Heart left ventricle (tissue), 16 donors: ENCODE measurements at regions of chr5 and their contacts with region 1.

Region 1: GRCh38 chr5:141359790-141360426 is at the start of gene PCDHGB2:
- DNase-seq: no peak
- ATAC-seq: peak; percentile 19 to 59 (median 38)
- H3K4me3 ChIP-seq: peak within 1 kb of the TSS in 10 of 12 donors; percentile 2 to 50 (median 38)
- H3K27ac ChIP-seq: peak within 1 kb of the TSS in 6 of 12 donors; percentile 4 to 61 (median 27)
- H3K4me1 ChIP-seq: peaks cover 0 to 33% (median 0%) of the 10 kb centered on the region in 12 donors
- H3K27me3 ChIP-seq: peaks cover 0 to 27% (median 0%) of the 10 kb centered on the region in 9 donors
- CTCF ChIP-seq: peak in 10 of 12 donors; percentile 28 to 58 (median 48)
- POLR2A ChIP-seq: no peak
- total RNA-seq, gene PCDHGB2: 4.4 to 13.8 (median 10.4) TPM

Region 2: GRCh38 chr5:141412854-141413539 is 53.1 kb after region 1 on chr5 and contains the start of gene PCDHGA10:
- intact Hi-C with region 1: loop called in 3 of 10 experiments (anchors 5 to 10 kb)
- DNase-seq: peak in 3 of 5 donors; percentile 53 to 61 (median 59)
- ATAC-seq: peak; percentile 24 to 66 (median 64)
- H3K4me3 ChIP-seq: peak within 1 kb of the TSS in 10 of 12 donors; percentile 10 to 49 (median 36)
- H3K27ac ChIP-seq: peak within 1 kb of the TSS in 1 of 12 donors; percentile 36
- H3K4me1 ChIP-seq: peaks cover 0 to 4% (median 0%) of the 10 kb centered on the region in 12 donors
- H3K27me3 ChIP-seq: peaks cover 0 to 78% (median 0%) of the 10 kb centered on the region in 9 donors
- CTCF ChIP-seq: peak; percentile 26 to 60 (median 42)
- POLR2A ChIP-seq: no peak
- total RNA-seq, gene PCDHGA10: 3.3 to 11.3 (median 6.1) TPM